Right cardiac atrium (tissue), 5 donors: ENCODE measurements at regions of chr1 and their contacts with region 1.

Region 1: GRCh38 chr1:59296358-59297256 is at the start of gene FGGY:
- DNase-seq: peak; percentile 99
- ATAC-seq: peak; percentile 97
- H3K4me3 ChIP-seq: peak within 1 kb of the TSS; percentile 63
- H3K27ac ChIP-seq: peak within 1 kb of the TSS; percentile 99
- H3K4me1 ChIP-seq: peaks cover 3% of the 10 kb centered on the region
- H3K27me3 ChIP-seq: no peaks in the 10 kb centered on the region
- total RNA-seq, gene FGGY: 17.4 to 20.5 (median 20.2) TPM

Region 2: GRCh38 chr1:58791106-58791505 is 505.5 kb before region 1 on chr1:
- intact Hi-C with region 1: loop called in 3 of 4 experiments (anchors 10 kb)
- DNase-seq: no peak
- ATAC-seq: no peak
- H3K4me3 ChIP-seq: no peak overlapping the region
- H3K27ac ChIP-seq: no peak overlapping the region
- H3K4me1 ChIP-seq: peaks cover 4% of the 10 kb centered on the region
- H3K27me3 ChIP-seq: no peaks in the 10 kb centered on the region

Region 3: DNA sequence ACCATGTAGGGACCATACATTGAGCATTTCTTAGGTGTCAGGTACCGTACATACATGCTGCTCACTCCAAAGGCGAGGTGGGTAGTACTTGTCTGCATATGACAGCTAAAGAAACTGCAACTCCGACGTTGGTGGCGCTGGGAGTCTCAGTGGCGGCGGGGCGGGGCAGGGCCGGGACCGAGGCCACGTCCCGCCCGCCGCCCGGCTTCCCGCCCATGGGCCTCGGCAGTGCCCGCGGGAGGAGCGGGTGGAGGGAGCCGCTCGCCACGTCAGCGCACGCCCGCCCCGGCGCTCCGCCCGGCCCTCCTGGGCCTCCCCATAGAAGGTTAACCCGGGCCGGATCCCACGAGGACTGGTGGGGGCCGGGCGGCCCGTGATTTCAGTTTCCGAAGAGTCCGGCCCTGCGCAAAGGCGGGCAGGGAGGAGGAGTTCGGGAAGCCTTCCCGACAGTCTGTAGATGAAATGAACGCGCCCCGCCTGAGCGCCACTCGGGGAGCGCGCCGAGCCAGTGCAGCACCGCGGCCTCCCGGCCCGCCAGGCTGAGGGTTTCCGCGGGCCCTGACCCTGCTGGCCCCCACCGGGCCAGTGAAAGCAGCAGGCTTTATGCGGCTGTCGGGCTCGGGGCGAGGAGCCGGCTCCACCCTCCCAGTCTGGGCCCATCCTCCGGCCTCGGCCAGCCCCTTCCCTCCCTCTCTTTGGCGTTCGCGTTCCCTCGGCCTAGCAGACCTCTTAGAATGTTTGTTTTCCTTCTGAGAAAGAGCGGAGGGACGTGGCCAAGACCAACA is 392.9 kb before region 1 on chr1:
- intact Hi-C with region 1: loop called in 1 of 4 experiments (anchors 10 kb)
- DNase-seq: peak; percentile 97 to 99 (median 98)
- ATAC-seq: peak; percentile 97 to 98
- H3K4me3 ChIP-seq: peak overlapping the region; percentile 40
- H3K27ac ChIP-seq: peak overlapping the region; percentile 95
- H3K4me1 ChIP-seq: peaks cover 13% of the 10 kb centered on the region
- H3K27me3 ChIP-seq: no peaks in the 10 kb centered on the region

Region 4: DNA sequence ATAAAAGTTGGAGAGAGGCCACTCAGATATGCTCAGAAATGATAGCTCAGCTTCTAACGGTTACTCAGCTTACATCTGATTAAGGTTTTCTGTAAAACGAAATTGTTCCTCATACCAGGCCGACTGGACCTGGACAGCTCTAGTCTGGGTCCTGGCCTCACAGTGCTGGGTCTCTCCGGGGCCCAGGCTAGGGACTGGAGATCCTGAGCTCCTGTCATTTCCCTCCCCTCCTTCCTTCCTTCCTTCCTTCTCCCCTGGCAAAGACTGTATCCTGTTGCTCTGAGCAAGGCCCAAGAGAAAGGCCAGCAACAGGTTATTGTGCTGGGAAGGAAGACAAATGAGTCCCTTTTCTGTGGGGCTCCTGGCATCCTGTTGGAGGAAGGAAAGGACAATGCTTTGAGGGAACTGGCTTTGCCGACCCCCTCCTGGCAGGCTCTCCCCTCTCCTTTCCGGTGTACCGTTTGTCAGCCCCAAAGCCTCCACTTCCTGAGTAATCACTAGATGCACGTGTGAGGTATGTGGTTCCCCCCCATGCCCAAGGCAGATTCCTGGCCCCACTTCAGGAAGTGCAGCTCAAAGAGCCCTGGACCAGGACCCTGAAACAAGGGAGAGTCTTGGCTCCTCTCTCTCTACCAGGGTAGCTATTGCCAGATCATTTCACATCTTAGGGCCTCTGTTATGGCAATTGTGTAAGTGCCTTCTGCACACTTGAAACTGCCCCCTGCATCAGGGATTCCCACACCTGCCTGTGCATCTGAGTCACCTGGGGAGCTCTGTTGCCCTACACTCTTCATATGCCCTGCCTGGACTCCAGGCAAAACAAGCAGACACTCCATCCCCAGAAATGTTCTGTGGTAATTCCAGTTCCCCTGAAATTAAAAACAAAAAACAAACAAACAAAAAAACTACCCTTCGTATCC is 212.4 kb before region 1 on chr1:
- intact Hi-C with region 1: loop called in 1 of 4 experiments (anchors 10 kb)
- DNase-seq: peak; percentile 36 to 66 (median 61)
- ATAC-seq: peak; percentile 84 to 85
- H3K4me3 ChIP-seq: no peak overlapping the region
- H3K27ac ChIP-seq: peak overlapping the region; percentile 46
- H3K4me1 ChIP-seq: peaks cover 7% of the 10 kb centered on the region
- H3K27me3 ChIP-seq: no peaks in the 10 kb centered on the region

Region 5: GRCh38 chr1:59150577-59151391 is 145.8 kb before region 1 on chr1:
- intact Hi-C with region 1: loop called in 2 of 4 experiments (anchors 10 kb)
- DNase-seq: peak; percentile 84 to 86 (median 86)
- ATAC-seq: peak; percentile 94 to 96
- H3K4me3 ChIP-seq: peak overlapping the region; percentile 21
- H3K27ac ChIP-seq: peak overlapping the region; percentile 97
- H3K4me1 ChIP-seq: peaks cover 12% of the 10 kb centered on the region
- H3K27me3 ChIP-seq: no peaks in the 10 kb centered on the region

Region 6: GRCh38 chr1:59412718-59413326 is 116.2 kb after region 1 on chr1:
- intact Hi-C with region 1: no loop called
- DNase-seq: no peak
- ATAC-seq: no peak
- H3K4me3 ChIP-seq: no peak overlapping the region
- H3K27ac ChIP-seq: no peak overlapping the region
- H3K4me1 ChIP-seq: peaks cover 2% of the 10 kb centered on the region
- H3K27me3 ChIP-seq: no peaks in the 10 kb centered on the region

Region 7: GRCh38 chr1:59457786-59458185 is 161.2 kb after region 1 on chr1:
- intact Hi-C with region 1: no loop called
- DNase-seq: no peak
- ATAC-seq: no peak
- H3K4me3 ChIP-seq: no peak overlapping the region
- H3K27ac ChIP-seq: no peak overlapping the region
- H3K4me1 ChIP-seq: no peaks in the 10 kb centered on the region
- H3K27me3 ChIP-seq: no peaks in the 10 kb centered on the region

Region 8: GRCh38 chr1:59699227-59699847 is 402.7 kb after region 1 on chr1:
- intact Hi-C with region 1: loop called in 3 of 4 experiments (anchors 5 to 10 kb)
- DNase-seq: no peak
- ATAC-seq: peak in 1 of 2 donors; percentile 44
- H3K4me3 ChIP-seq: no peak overlapping the region
- H3K27ac ChIP-seq: no peak overlapping the region
- H3K4me1 ChIP-seq: peaks cover 11% of the 10 kb centered on the region
- H3K27me3 ChIP-seq: no peaks in the 10 kb centered on the region

Region 9: GRCh38 chr1:59707178-59707791 is 410.7 kb after region 1 on chr1:
- intact Hi-C with region 1: loop called in 2 of 4 experiments (anchors 5 to 10 kb)
- DNase-seq: peak; percentile 66 to 81 (median 69)
- ATAC-seq: peak; percentile 91 to 93
- H3K4me3 ChIP-seq: no peak overlapping the region
- H3K27ac ChIP-seq: peak overlapping the region; percentile 69
- H3K4me1 ChIP-seq: peaks cover 13% of the 10 kb centered on the region
- H3K27me3 ChIP-seq: no peaks in the 10 kb centered on the region